K562 (cell line): ENCODE measurements at regions of chr21 and their contacts with region 1.

Region 1: GRCh38 chr21:42467140-42467983 is 28.7 kb downstream of the RSPH1 start:
- DNase-seq: peak; percentile 63 to 78 (median 72)
- ATAC-seq: peak; percentile 81
- H3K4me3 ChIP-seq: no peak overlapping the region
- H3K27ac ChIP-seq: no peak overlapping the region
- H3K4me1 ChIP-seq: peaks cover 32 to 46% of the 10 kb centered on the region in 2 experiments
- H3K27me3 ChIP-seq: peaks cover 14 to 15% of the 10 kb centered on the region in 2 experiments; a peak in 4 of 5 replicates
- CTCF ChIP-seq: peak; percentile 58 to 73 (median 66)
- EP300 ChIP-seq: peak; percentile 31; the same call in 1 of the 2 replicates
- POLR2A ChIP-seq: no peak
- RAD21 ChIP-seq: peak; percentile 64 to 74

Region 2: DNA sequence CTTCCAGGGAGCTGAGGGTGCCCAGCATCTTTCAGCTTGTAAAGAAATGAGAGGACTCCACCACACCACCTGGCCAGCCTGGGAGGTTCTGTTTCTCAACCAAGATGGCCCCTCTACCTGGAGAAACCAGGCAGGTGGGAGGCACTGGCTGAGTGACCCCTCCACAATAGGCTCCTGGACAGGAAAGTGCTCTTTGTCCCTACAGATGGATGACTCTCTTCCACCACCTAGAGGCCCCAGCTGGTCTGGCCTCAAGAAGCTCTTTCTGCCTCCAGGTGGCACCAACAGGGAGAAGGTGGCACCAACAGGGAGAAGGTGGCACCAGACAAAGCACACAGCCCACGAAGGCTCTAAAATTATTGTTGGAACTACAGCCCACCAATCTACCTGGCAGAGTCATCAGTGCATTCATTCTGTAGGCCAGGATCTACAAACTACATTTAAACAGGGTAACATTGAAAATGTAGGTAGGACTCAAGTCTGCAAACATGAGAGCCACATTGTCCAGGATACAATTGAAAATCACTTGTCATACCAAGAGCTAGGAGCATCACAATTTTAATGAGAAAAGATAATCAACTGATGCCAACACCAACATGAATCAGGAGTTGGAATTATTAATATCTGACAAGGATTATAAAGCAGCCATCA is 85.9 kb before region 1 on chr21:
- CTCF ChIA-PET with region 1: no interaction called
- POLR2A ChIA-PET with region 1: no interaction called
- in situ Hi-C with region 1: no loop called
- intact Hi-C with region 1: no loop called
- DNase-seq: peak in 2 of 4 experiments; percentile 45 to 53
- ATAC-seq: peak; percentile 64
- H3K4me3 ChIP-seq: no peak overlapping the region
- H3K27ac ChIP-seq: no peak overlapping the region
- H3K4me1 ChIP-seq: peaks cover 4 to 9% of the 10 kb centered on the region in 2 experiments; a peak in 3 of 5 replicates
- H3K27me3 ChIP-seq: peaks cover 10 to 55% of the 10 kb centered on the region in 2 experiments; a peak in 4 of 5 replicates
- CTCF ChIP-seq: peak; percentile 73 to 98 (median 95)
- EP300 ChIP-seq: no peak
- POLR2A ChIP-seq: no peak
- RAD21 ChIP-seq: peak; percentile 20 to 62; a peak in 3 of 4 replicates

Region 3: GRCh38 chr21:42496122-42496900 is 28.9 kb after region 1 on chr21 and contains the start of gene RSPH1:
- CTCF ChIA-PET with region 1: no interaction called
- POLR2A ChIA-PET with region 1: no interaction called
- in situ Hi-C with region 1: no loop called
- intact Hi-C with region 1: loop called (anchors 2 kb)
- DNase-seq: peak; percentile 99 to 100 (median 100)
- ATAC-seq: peak; percentile 100
- H3K4me3 ChIP-seq: peak within 1 kb of the TSS; percentile 44
- H3K27ac ChIP-seq: no peak within 1 kb of the TSS
- H3K4me1 ChIP-seq: peaks cover 15 to 16% of the 10 kb centered on the region in 2 experiments; a peak in 4 of 5 replicates
- H3K27me3 ChIP-seq: peaks cover 23 to 31% of the 10 kb centered on the region in 2 experiments
- CTCF ChIP-seq: peak in 1 of 3 experiments; percentile 1; a peak in 1 of 6 replicates
- EP300 ChIP-seq: no peak
- POLR2A ChIP-seq: no peak
- RAD21 ChIP-seq: no peak
- polyA plus RNA-seq, gene RSPH1: not detected

Region 4: DNA sequence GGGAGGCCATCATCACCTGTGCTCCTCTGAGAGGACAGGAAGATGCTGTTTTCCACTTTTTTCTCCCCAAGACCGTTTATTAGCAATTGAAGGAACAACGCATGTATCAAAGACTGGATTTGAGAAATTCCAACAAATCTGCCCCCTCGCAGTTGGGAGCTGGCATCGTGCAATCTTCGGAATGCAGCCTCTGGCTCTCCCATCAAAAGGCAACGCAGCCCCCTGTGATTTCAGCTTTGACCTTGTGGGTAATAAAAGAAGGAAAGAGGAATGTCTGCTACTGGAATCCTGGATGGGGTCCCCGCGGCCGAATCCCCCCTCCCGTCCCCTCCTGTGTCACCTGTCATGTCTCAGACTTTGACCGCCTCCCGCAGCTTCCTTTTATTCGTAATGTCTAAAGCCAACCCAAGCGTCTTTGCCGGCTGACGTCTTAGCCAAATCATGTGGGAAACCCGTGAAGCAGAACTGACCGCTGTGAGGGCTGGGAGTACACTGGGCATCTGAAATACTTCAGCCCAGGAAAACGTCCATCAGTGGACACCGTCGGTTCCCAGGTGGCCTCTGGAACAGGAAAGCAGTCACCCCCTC is 310.5 kb after region 1 on chr21:
- CTCF ChIA-PET with region 1: no interaction called
- POLR2A ChIA-PET with region 1: no interaction called
- in situ Hi-C with region 1: no loop called
- intact Hi-C with region 1: no loop called
- DNase-seq: no peak
- ATAC-seq: no peak
- H3K4me3 ChIP-seq: no peak overlapping the region
- H3K27ac ChIP-seq: no peak overlapping the region
- H3K4me1 ChIP-seq: peaks cover 0 to 13% of the 10 kb centered on the region in 2 experiments; a peak in 2 of 5 replicates
- H3K27me3 ChIP-seq: peaks cover 65 to 81% of the 10 kb centered on the region in 2 experiments
- CTCF ChIP-seq: no peak
- EP300 ChIP-seq: no peak
- POLR2A ChIP-seq: no peak
- RAD21 ChIP-seq: no peak